ENCODE measurements at regions of chr12 and their contacts with region 1.

Region 1: GRCh38 chr12:67268896-67269631 is at the start of gene CAND1:
- DNase-seq: peak; percentile 99
- H3K4me3 ChIP-seq: peak within 1 kb of the TSS; percentile 93
- H3K27ac ChIP-seq: peak within 1 kb of the TSS; percentile 87
- H3K4me1 ChIP-seq: peaks cover 33% of the 10 kb centered on the region
- CTCF ChIP-seq: 0 out of 2 replicates have a peak, but pooled peaks have one; percentile 12
- total RNA-seq, gene CAND1: 104 and 109 TPM in 2 replicates

Region 2: DNA sequence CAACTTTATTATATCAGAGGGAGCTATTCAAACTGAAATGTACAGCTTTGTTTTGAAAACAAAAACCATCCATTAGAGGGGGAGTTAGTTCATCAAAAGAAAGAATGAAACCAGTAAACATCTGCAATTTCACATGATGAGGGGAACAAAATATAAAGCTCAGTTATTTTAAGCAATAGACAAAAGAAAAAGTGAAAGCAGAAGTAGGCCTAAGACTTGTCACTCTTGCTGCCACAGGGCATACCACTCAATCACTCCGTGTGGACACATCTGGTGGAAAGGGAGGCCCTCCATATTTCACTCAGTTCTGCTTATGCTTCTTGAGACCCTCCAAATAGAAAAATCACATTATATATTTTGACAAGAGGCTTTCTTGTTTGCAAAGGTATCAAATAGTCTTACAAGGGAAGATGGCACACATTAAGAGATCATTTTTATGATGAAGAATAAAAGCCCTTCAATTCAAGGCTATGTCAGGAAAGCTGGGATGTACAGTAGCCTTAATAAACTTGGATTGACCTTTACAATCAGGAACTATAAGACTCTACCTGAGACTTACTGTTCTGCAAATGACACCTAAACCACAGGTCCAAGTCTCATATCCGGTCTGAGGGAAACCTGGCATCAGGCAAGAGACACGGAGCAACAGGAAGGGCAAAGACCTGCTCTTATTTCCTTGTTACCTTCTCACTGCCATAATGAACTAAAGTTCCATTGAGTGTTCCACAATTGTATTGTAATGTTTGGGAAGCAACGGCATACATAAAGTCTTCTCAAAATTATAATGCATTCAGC is 367.7 kb before region 1 on chr12:
- CTCF ChIA-PET with region 1: no interaction called
- POLR2A ChIA-PET with region 1: interaction called, 5 read pairs
- intact Hi-C with region 1: loop called (anchors 1 kb)
- DNase-seq: peak; percentile 80
- H3K4me3 ChIP-seq: no peak overlapping the region
- H3K27ac ChIP-seq: peak overlapping the region; percentile 70
- H3K4me1 ChIP-seq: peaks cover 37% of the 10 kb centered on the region
- CTCF ChIP-seq: no peak

Region 3: DNA sequence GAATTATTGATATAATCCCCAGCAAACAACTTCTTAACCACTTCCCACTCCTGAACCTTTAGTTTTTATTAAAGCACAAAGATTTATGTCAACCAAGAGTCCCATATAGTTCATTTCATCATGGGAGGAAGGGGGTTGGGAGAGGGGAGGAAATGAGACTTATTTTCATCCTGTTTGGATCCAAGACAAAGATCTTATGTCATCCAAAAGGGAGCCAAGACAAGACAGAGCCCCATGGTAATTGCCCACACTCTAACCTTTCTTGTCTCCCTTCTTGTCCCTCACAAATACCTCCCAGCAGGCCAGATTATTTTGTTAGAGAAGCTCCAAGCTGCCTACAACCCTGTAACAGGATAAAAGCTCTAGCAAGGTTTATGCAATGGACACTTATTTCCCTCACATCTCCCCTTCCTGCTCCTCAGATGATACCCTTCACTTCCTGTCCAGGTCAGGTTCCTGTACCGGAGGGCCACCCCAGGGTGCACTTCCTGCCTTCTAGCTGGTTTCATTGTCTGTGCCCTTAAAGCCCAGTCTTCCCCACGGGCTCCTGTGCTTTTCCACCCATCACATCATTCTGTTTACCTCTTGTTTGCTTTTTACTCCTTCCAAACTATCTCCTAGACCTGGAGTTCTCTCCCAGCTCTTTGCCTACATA is 1186.8 kb after region 1 on chr12:
- CTCF ChIA-PET with region 1: no interaction called
- POLR2A ChIA-PET with region 1: no interaction called
- intact Hi-C with region 1: no loop called
- DNase-seq: peak; percentile 13
- H3K4me3 ChIP-seq: no peak overlapping the region
- H3K27ac ChIP-seq: no peak overlapping the region
- H3K4me1 ChIP-seq: peaks cover 7% of the 10 kb centered on the region
- CTCF ChIP-seq: no peak